HepG2 (cell line): ENCODE measurements at regions of chr19 and their contacts with region 1.

Region 1: GRCh38 chr19:13833330-13834243 is 38.3 kb downstream of the ZSWIM4 start:
- DNase-seq: peak; percentile 84
- ATAC-seq: peak; percentile 94
- H3K4me3 ChIP-seq: peak overlapping the region; percentile 49 to 74 (median 66)
- H3K27ac ChIP-seq: peak overlapping the region; percentile 49
- H3K4me1 ChIP-seq: peaks cover 20% of the 10 kb centered on the region
- H3K27me3 ChIP-seq: no peaks in the 10 kb centered on the region
- CTCF ChIP-seq: peak; percentile 82
- EP300 ChIP-seq: no peak
- POLR2A ChIP-seq: peak; percentile 26 to 58; a peak in 2 of 4 replicates
- RAD21 ChIP-seq: peak; percentile 79

Region 2: GRCh38 chr19:13794757-13795589 is 38.6 kb before region 1 on chr19 and contains the start of gene ZSWIM4:
- CTCF ChIA-PET with region 1: no interaction called
- POLR2A ChIA-PET with region 1: no interaction called
- in situ Hi-C with region 1: no loop called
- intact Hi-C with region 1: loop called (anchors 5 kb)
- DNase-seq: peak; percentile 98
- ATAC-seq: peak; percentile 98
- H3K4me3 ChIP-seq: peak within 1 kb of the TSS; percentile 70 to 93 (median 91)
- H3K27ac ChIP-seq: peak within 1 kb of the TSS; percentile 48
- H3K4me1 ChIP-seq: peaks cover 31% of the 10 kb centered on the region
- H3K27me3 ChIP-seq: no peaks in the 10 kb centered on the region
- CTCF ChIP-seq: no peak
- EP300 ChIP-seq: 0 out of 4 replicates have a peak, but pooled peaks of 1 of the 2 experiments have one; percentile 22
- POLR2A ChIP-seq: peak in 1 of 2 experiments; percentile 42; a peak in 2 of 4 replicates
- RAD21 ChIP-seq: no peak
- total RNA-seq, gene ZSWIM4: 0.27 and 0.33 TPM in 2 replicates